Common myeloid progenitor, CD34-positive (primary cell): ENCODE measurements at regions of chr5 and their contacts with region 1.

Region 1: DNA sequence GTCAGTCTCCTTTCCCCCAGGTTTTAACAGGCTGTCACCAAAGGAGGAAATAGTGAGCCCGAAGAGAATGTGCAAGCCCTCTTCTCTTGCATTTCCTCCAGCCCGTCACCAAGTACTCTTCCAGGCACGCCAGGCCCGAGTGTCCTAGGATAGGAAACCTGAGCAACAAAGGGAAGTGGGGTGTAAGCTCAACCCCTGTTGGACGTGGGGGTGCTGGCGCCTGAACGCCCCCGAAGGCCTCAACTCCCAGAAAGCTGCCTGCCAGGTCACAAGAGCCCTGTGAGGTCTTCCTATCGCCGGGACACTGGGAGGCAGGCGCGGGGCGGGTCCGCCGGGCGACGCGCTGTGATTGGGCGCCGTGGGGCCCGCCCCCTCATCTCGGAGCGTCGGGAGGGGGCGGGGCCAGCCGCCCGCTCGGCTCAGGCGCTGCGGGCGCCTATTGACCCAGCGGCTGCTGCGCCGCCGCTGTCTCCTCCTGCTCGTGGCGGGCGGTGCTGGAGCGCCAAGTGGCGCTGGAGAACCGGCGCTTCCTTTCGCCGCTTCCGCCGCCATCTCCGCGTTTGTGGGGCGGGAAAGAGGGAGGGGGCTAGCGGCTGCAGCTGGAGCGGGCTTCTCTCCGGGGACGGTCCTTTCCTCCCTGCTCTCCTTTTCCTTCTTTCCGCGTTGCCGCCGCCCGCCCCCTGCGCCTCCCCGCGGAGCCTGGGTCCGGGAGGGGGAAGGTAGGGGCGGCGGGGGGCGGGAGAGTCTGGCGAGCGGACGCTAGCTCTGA is 572 bp upstream of the MAN2A1 start:
- DNase-seq: peak; percentile 91 to 93 (median 93)
- H3K4me3 ChIP-seq: peak overlapping the region; percentile 87 to 96 (median 90)
- H3K27ac ChIP-seq: peak overlapping the region; percentile 52 to 83
- H3K4me1 ChIP-seq: peaks cover 11 to 29% (median 21%) of the 10 kb centered on the region in 4 experiments
- H3K27me3 ChIP-seq: no peaks in the 10 kb centered on the region

Region 2: DNA sequence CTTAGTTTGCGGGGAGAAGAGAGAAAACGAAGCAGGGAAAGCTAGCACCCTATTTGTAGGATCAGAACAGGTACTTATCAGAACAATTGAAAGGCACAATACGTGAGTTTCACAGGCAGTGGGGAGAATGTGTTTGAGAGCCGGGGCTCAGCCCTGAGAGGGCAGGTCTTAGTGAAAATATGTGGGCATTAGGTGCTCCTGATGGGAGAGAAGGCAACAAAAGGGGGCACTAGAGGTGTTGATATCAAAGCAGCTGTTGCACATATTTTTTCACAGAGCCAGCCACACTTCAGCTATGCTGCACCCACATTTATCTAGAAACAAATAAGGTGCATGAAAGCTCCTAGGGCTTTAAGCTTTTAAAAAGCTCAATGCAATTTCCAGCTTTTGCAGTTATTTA is 99.2 kb before region 1 on chr5:
- CTCF ChIA-PET with region 1: interaction called, 33 read pairs
- POLR2A ChIA-PET with region 1: no interaction called
- DNase-seq: peak; percentile 58 to 74 (median 74)
- H3K4me3 ChIP-seq: no peak overlapping the region
- H3K27ac ChIP-seq: no peak overlapping the region
- H3K4me1 ChIP-seq: peaks cover 0 to 2% (median 0%) of the 10 kb centered on the region in 4 experiments
- H3K27me3 ChIP-seq: no peaks in the 10 kb centered on the region

Region 3: DNA sequence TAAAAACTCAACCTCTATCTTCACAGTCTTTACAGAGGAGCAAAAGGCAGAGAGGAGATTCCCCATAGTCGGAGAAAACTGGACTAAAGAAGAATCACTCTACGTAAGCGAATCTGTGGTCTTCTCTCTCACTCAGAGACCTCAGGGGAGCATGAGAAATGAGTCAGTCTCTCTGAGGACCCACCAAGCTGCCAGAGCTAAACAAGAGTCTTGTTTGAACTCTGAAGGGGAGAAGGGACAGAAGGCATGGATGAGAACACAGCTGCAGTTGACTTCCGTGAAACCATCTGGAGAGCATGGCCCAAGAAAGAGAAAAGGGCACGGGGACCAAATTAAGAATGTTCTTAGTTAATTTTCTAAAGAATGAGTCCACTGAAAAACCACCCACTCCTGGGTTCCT is 12.2 kb before region 1 on chr5:
- CTCF ChIA-PET with region 1: interaction called, 33 read pairs
- POLR2A ChIA-PET with region 1: interaction called, 3 read pairs
- DNase-seq: no peak
- H3K4me3 ChIP-seq: no peak overlapping the region
- H3K27ac ChIP-seq: no peak overlapping the region
- H3K4me1 ChIP-seq: no peaks in the 10 kb centered on the region
- H3K27me3 ChIP-seq: no peaks in the 10 kb centered on the region